ENCODE measurements at regions of chr17 and their contacts with region 1.

Region 1: GRCh38 chr17:75405365-75406221 is at the start of gene GRB2:
- DNase-seq: peak; percentile 100
- H3K4me3 Mint-ChIP-seq: peak within 1 kb of the TSS; percentile 97
- H3K27ac Mint-ChIP-seq: peak within 1 kb of the TSS; percentile 97
- H3K4me1 Mint-ChIP-seq: peaks cover 38% of the 10 kb centered on the region
- H3K27me3 Mint-ChIP-seq: no peaks in the 10 kb centered on the region
- total RNA-seq, gene GRB2: 166 to 169 TPM

Region 2: DNA sequence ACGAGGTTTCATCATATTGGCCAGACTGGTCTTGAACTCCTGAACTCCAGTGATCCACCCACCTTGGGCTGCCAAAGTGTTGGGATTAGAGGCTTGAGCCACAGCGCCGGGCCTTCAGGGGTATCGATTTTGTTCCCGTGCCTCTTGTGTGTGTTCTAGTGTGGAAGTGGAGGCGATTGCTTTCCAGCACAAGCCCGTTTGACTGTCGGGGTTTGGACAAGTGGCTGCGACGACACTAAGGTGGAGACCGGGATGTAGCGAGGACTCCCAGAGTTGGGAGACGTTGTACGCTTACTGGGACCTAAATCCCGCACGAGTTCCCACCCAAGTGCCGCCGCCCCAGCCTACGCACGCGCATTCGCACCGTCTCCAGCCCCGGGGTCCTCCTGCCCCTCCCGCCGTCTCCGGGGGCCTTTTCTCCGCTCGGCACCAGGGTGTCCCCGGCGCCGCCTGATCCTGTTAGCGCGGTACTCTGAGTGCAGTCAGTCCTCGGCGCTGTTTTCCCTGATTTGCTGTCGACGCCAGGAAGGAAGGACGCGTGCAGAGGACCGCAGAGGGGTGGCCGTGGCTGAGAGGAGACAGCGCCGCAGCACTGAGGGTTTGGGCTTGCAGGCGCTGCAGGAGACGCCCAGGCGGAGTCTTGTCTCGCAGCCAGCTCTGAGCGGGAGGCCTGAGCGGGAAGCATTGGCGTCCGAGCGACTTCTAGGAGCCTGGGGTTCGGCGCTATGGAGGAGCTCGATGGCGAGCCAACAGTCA is 200.4 kb before region 1 on chr17 and contains the start of gene NUP85:
- CTCF ChIA-PET with region 1: no interaction called
- intact Hi-C with region 1: loop called (anchors 10 kb)
- DNase-seq: peak; percentile 94
- H3K4me3 Mint-ChIP-seq: peak within 1 kb of the TSS; percentile 98
- H3K27ac Mint-ChIP-seq: peak within 1 kb of the TSS; percentile 98
- H3K4me1 Mint-ChIP-seq: peaks cover 24% of the 10 kb centered on the region
- H3K27me3 Mint-ChIP-seq: no peaks in the 10 kb centered on the region
- total RNA-seq, gene NUP85: 112 to 116 TPM

Region 3: DNA sequence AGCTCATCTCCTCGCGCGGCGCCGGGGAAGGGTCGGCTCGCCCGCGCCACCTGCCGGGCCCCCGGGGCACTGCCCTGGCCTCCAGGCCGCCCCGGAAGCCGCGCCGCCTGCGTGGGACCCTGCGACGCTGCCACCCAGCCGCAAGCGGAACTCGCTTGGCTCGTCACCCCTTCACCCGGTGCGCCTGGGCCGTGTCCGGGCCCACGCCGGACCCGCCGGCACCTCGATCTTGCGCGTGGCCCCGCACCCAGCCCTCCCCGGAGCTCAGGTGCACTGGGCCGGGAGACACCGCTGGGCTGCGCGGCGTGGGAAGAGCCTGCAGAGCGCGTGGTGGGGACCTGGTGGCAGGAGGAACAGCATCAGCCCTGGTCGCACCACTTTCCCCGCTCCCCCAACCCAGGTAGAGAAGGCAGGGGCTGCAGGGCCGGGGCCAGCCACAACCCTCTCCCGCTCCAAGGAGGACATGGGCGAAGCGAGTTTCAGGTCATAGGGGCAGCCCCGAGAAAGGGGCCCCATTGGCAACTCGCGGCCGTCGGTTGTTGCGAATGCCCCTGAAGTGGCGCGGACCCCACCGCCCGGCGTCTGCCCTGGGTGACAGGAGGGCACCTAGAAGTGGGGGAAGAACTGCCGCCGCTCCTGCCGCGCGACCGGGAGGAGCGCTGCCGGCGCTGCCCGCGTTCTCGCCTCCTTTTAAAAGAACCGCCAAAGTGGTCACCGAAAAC is 134.2 kb before region 1 on chr17:
- CTCF ChIA-PET with region 1: interaction called, 3 read pairs
- intact Hi-C with region 1: loop called (anchors 1 kb)
- DNase-seq: peak; percentile 83
- H3K4me3 Mint-ChIP-seq: peak overlapping the region; percentile 76
- H3K27ac Mint-ChIP-seq: peak overlapping the region; percentile 70
- H3K4me1 Mint-ChIP-seq: peaks cover 35% of the 10 kb centered on the region
- H3K27me3 Mint-ChIP-seq: no peaks in the 10 kb centered on the region

Region 4: GRCh38 chr17:75319904-75320691 is 85.5 kb before region 1 on chr17:
- CTCF ChIA-PET with region 1: interaction called, 8 read pairs
- intact Hi-C with region 1: loop called (anchors 1 kb)
- DNase-seq: no peak
- H3K4me3 Mint-ChIP-seq: no peak overlapping the region
- H3K27ac Mint-ChIP-seq: peak overlapping the region; percentile 43
- H3K4me1 Mint-ChIP-seq: peaks cover 23% of the 10 kb centered on the region
- H3K27me3 Mint-ChIP-seq: no peaks in the 10 kb centered on the region

Region 5: DNA sequence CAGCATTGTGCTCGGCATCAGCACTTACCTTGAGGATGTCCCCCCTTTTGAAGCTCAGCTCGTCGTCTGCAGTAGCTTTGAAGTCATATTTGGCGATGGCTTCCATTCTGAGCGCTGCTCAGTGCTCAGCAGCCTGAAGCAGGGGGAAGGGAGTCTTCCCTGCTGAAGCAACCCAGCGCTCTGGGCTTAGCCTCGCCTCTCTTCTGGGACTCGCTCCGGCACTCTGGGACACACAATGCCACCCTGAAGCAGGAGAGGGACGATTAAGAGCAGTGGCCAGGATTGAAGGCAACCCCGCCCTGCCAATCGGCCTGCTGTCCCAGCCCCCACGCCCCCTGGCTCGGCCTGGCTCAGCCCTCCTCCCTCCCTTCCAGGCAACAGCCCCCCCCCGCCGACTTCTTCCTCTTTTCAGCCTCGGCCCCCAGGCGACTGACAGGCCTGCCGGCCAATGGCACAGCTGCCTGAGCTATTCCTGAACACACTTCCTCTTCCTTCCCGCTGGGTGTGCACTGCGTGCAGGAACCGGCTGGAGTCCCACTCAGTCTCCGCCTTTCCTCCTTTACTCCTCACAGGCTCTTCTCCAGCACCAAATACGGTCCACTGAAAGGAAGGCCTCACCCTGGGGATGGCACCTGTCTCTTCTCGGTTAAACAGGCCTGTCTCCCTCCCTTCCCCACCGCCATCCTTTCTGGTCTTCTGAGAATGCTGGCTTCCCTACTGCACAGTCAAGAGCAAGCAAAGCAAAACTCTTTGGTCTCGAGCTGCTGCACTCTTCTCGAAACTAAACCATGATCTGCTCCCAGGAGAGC is 11.9 kb before region 1 on chr17:
- CTCF ChIA-PET with region 1: interaction called, 6 read pairs
- intact Hi-C with region 1: loop called (anchors 1 kb)
- DNase-seq: peak; percentile 91
- H3K4me3 Mint-ChIP-seq: peak overlapping the region; percentile 93
- H3K27ac Mint-ChIP-seq: peak overlapping the region; percentile 66
- H3K4me1 Mint-ChIP-seq: peaks cover 81% of the 10 kb centered on the region
- H3K27me3 Mint-ChIP-seq: no peaks in the 10 kb centered on the region